Panc1 (cell line): ENCODE measurements at regions of chr18 and their contacts with region 1.

Region 1: DNA sequence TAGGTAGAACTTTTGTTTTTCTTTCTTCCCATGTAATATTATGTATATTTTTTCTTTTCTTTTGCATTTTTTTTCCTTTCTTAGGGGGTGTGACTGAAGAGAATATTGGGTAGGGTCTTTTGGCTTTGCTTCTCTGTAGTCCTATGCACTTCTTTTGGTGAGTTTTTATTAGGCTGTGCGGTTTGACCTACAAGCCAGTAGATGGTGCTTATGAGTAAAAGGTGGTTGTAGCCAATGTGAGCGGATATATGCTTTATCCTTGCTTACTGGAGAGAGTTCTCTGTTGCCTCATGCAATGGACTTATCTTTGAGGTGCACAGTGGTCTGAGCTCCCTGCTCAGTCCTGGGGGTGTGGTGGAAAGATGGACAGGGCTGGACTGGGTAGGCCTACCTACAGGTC is 52.7 kb downstream of the DSEL start:
- DNase-seq: no peak
- ATAC-seq: no peak
- H3K4me3 ChIP-seq: no peak overlapping the region
- H3K27ac ChIP-seq: no peak overlapping the region
- H3K4me1 ChIP-seq: no peaks in the 10 kb centered on the region
- H3K27me3 ChIP-seq: no peaks in the 10 kb centered on the region
- CTCF ChIP-seq: no peak

Region 2: DNA sequence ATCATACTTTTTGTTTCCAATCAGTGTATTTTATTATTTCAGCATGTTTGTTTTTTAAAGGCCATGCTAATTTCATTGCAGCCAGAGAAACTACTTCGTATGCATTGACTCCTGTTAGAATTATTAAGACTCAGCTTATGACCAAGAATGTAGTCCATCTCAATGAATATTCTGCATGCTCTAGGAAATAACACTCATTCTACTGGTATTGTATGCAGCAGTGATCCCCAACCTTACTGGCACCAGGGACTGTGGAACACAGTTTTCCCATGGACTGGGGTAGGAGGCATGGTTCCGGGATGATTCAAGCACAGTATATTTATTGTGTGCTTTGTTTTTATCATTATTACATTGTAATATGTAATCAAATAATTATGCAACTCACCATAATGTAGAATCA is 304.2 kb before region 1 on chr18:
- CTCF ChIA-PET with region 1: no interaction called
- POLR2A ChIA-PET with region 1: no interaction called
- in situ Hi-C with region 1: no loop called
- intact Hi-C with region 1: no loop called
- DNase-seq: no peak
- ATAC-seq: no peak
- H3K4me3 ChIP-seq: no peak overlapping the region
- H3K27ac ChIP-seq: no peak overlapping the region
- H3K4me1 ChIP-seq: no peaks in the 10 kb centered on the region
- H3K27me3 ChIP-seq: no peaks in the 10 kb centered on the region
- CTCF ChIP-seq: no peak

Region 3: GRCh38 chr18:67282796-67283195 is 181.0 kb before region 1 on chr18:
- CTCF ChIA-PET with region 1: no interaction called
- POLR2A ChIA-PET with region 1: no interaction called
- in situ Hi-C with region 1: no loop called
- intact Hi-C with region 1: no loop called
- DNase-seq: no peak
- ATAC-seq: no peak
- H3K4me3 ChIP-seq: no peak overlapping the region
- H3K27ac ChIP-seq: no peak overlapping the region
- H3K4me1 ChIP-seq: no peaks in the 10 kb centered on the region
- H3K27me3 ChIP-seq: no peaks in the 10 kb centered on the region
- CTCF ChIP-seq: no peak

Region 4: GRCh38 chr18:67500522-67501205 is 36.8 kb after region 1 on chr18:
- CTCF ChIA-PET with region 1: no interaction called
- POLR2A ChIA-PET with region 1: interaction called, 18 read pairs
- in situ Hi-C with region 1: no loop called
- intact Hi-C with region 1: no loop called
- DNase-seq: no peak
- ATAC-seq: no peak
- H3K4me3 ChIP-seq: no peak overlapping the region
- H3K27ac ChIP-seq: no peak overlapping the region
- H3K4me1 ChIP-seq: no peaks in the 10 kb centered on the region
- H3K27me3 ChIP-seq: no peaks in the 10 kb centered on the region
- CTCF ChIP-seq: no peak